Naive thymus-derived CD8-positive, alpha-beta T cell (primary cell): ENCODE measurements at regions of chr22 and their contacts with region 1.

Region 1: GRCh38 chr22:45341498-45341897 is 31.8 kb downstream of the FAM118A start:
- DNase-seq: peak in 9 of 10 donors; percentile 53 to 90 (median 75)
- ATAC-seq: peak; percentile 85 to 90
- H3K4me3 Mint-ChIP-seq: peak overlapping the region; percentile 41 to 87 (median 57)
- H3K27ac Mint-ChIP-seq: peak overlapping the region; percentile 84 to 98 (median 96)
- H3K4me1 Mint-ChIP-seq: peaks cover 20 to 49% (median 40%) of the 10 kb centered on the region in 4 donors
- H3K27me3 Mint-ChIP-seq: no peaks in the 10 kb centered on the region

Region 2: DNA sequence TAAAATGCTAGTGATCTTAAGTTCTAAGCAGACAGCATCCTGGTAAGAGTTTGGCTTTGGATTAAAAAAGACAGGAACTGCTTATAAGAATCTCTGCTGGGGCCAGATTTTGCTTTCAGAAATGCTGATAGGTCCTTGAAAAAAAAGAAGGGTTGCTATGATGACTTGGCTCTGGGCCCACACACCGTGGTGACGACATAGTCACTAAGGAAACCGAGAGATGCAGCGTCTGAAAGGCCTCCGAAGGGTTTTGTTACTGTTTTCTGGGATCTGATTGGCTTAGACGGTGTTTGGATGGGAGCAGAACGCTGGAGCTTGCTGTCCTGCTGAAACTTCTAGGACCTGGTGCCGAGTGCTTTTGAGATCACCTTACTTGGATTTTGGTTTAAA is 23.3 kb before region 1 on chr22:
- POLR2A ChIA-PET with region 1: interaction called, 14 read pairs
- DNase-seq: peak; percentile 74 to 98 (median 95)
- ATAC-seq: peak; percentile 67 to 75
- H3K4me3 Mint-ChIP-seq: peak overlapping the region; percentile 77 to 92 (median 83)
- H3K27ac Mint-ChIP-seq: peak overlapping the region; percentile 97 to 100 (median 99)
- H3K4me1 Mint-ChIP-seq: peaks cover 23 to 90% (median 72%) of the 10 kb centered on the region in 4 donors
- H3K27me3 Mint-ChIP-seq: no peaks in the 10 kb centered on the region

Region 3: DNA sequence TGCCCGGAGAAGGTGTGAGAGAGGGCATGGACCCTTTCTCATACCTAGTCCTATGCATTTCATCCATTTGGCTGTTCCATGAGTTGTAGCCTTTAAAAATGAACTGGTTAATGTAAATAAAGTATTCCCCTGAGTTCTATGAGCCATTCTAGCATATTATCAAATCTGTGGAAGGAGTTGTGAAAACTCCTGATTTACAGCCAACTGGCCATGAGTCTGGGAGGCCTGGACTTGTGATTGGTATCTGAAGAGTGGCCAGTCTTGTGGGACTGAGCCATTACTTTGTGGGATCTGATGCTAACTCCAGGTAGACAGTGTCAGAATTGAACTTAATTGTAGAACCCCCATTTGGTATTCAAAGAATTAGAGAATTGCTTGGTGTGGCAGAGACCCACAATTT is 16.6 kb after region 1 on chr22:
- POLR2A ChIA-PET with region 1: no interaction called
- DNase-seq: no peak
- ATAC-seq: no peak
- H3K4me3 Mint-ChIP-seq: no peak overlapping the region
- H3K27ac Mint-ChIP-seq: peak overlapping the region in 1 of 10 donors; percentile 27
- H3K4me1 Mint-ChIP-seq: peaks cover 0 to 8% (median 3%) of the 10 kb centered on the region in 4 donors
- H3K27me3 Mint-ChIP-seq: no peaks in the 10 kb centered on the region